CD8-positive, alpha-beta T cell (primary cell): ENCODE measurements at regions of chr14 and their contacts with region 1.

Region 1: DNA sequence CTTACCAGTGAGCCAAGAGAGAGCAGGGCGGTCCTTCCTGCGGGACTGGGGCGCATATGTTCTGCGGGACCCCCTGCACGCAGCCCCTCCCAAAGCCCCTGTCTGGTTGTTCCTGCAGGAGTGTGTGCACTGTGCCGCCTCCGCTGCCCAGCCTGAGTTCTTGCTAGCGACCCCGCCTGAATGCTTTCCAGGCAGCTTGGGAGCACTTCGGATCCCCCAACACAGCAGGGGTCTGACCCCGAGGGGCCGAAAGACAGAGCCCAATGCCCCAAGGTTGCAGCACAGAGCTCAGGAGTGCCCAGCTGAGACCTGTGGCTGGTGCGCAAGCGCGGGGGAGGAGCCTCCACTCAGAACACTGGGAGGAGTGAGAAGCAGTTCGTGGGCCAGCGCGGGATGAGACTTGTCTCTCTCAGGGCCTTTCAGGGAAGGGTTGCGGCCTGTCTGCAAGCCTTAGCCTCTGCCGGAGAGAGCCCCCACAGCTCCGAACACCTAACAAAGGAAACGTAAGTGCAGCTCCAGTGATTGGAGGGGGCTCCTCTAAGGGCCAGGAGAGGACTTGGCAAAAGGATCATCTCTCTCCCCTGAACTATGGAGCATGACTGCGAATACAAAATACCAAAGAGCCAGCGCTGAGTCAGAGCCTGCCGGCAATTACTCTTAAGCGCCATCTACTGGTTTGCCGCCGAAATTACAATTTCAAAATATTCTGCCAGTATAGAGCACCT is 50.5 kb downstream of the GTF2A1 start:
- DNase-seq: peak; percentile 72 to 92 (median 89)
- ATAC-seq: peak; percentile 97
- H3K4me3 ChIP-seq: peak overlapping the region; percentile 67 to 70
- H3K4me3 Mint-ChIP-seq: peak overlapping the region; percentile 94
- H3K27ac ChIP-seq: peak overlapping the region; percentile 53 to 81
- H3K27ac Mint-ChIP-seq: peak overlapping the region; percentile 97
- H3K4me1 ChIP-seq: peaks cover 12% of the 10 kb centered on the region
- H3K4me1 Mint-ChIP-seq: peaks cover 20% of the 10 kb centered on the region
- H3K27me3 ChIP-seq: no peaks in the 10 kb centered on the region
- H3K27me3 Mint-ChIP-seq: no peaks in the 10 kb centered on the region
- CTCF ChIP-seq: peak; percentile 77

Region 2: GRCh38 chr14:81533536-81534343 is 363.5 kb after region 1 on chr14 and contains the start of gene SEL1L:
- CTCF ChIA-PET with region 1: no interaction called
- POLR2A ChIA-PET with region 1: no interaction called
- intact Hi-C with region 1: loop called (anchors 2 to 5 kb)
- DNase-seq: peak; percentile 99 to 100 (median 99)
- ATAC-seq: peak; percentile 95
- H3K4me3 ChIP-seq: peak within 1 kb of the TSS; percentile 84 to 88
- H3K4me3 Mint-ChIP-seq: peak within 1 kb of the TSS; percentile 99
- H3K27ac ChIP-seq: peak within 1 kb of the TSS; percentile 70
- H3K27ac Mint-ChIP-seq: peak within 1 kb of the TSS; percentile 91
- H3K4me1 ChIP-seq: peaks cover 29% of the 10 kb centered on the region
- H3K4me1 Mint-ChIP-seq: peaks cover 65% of the 10 kb centered on the region
- H3K27me3 ChIP-seq: no peaks in the 10 kb centered on the region
- H3K27me3 Mint-ChIP-seq: no peaks in the 10 kb centered on the region
- CTCF ChIP-seq: no peak
- total RNA-seq, gene SEL1L: 41.2 to 46.5 TPM